Caco-2 (cell line): ENCODE measurements at regions of chr3 and their contacts with region 1.

Region 1: GRCh38 chr3:188037216-188037718 is 116.7 kb upstream of the LPP start:
- DNase-seq: peak; percentile 82 to 88
- H3K4me3 ChIP-seq: no peak overlapping the region
- H3K4me3 Mint-ChIP-seq: peak overlapping the region; percentile 40
- H3K27ac Mint-ChIP-seq: peak overlapping the region; percentile 53
- H3K4me1 ChIP-seq: peaks cover 34% of the 10 kb centered on the region
- H3K4me1 Mint-ChIP-seq: peaks cover 31% of the 10 kb centered on the region
- H3K27me3 ChIP-seq: no peaks in the 10 kb centered on the region
- H3K27me3 Mint-ChIP-seq: no peaks in the 10 kb centered on the region
- CTCF ChIP-seq: peak; percentile 51 to 77

Region 2: GRCh38 chr3:187935623-187936156 is 101.6 kb before region 1 on chr3:
- CTCF ChIA-PET with region 1: no interaction called
- POLR2A ChIA-PET with region 1: no interaction called
- intact Hi-C with region 1: no loop called
- DNase-seq: no peak
- H3K4me3 ChIP-seq: no peak overlapping the region
- H3K4me3 Mint-ChIP-seq: no peak overlapping the region
- H3K27ac Mint-ChIP-seq: no peak overlapping the region
- H3K4me1 ChIP-seq: no peaks in the 10 kb centered on the region
- H3K4me1 Mint-ChIP-seq: no peaks in the 10 kb centered on the region
- H3K27me3 ChIP-seq: no peaks in the 10 kb centered on the region
- H3K27me3 Mint-ChIP-seq: no peaks in the 10 kb centered on the region
- CTCF ChIP-seq: no peak

Region 3: DNA sequence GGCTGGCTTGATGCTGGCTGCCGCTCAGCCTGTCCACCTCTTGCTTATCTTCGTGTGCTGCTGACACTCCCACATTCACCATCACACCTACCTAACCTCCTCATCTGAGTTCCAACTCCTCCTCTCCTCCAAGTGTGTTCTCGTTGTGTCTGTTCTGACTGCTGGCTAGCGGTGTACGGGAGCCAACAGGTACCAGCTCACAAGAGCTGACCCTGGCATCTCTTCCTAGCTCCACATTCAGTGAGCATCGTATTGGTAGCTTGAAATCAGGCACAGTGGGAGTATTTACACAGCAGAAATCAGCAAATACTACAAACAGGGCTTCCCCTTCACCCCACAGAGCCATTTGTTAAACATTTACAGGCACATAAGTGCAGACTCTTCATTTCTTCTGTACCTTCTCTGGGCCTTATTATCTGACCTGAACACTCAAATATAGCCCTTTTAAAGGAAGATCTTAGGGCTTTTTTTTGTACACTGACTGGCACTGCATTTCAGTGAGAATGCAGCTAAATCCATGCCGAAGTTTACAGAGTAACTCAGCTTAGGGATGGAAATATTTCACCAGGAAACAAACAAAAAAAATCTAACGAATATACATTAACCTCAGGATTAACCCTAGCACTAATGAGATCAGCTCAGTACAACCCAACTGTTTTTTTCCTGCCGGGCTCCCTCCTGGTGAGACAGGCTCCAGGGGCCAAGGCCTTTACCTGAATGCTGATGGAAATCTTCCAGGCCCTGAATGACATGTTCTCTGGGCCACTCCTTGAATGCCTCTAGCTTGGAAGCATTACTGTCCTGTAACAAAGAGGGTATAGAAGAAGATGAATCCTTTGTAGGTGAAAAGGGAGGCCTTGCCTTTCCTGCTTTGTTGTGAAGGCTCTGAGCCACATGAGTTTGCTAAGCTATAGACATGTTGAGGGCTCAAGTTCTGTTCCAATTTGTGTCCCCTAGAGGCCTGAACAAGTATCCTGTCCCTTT is 33.8 kb before region 1 on chr3:
- CTCF ChIA-PET with region 1: no interaction called
- POLR2A ChIA-PET with region 1: no interaction called
- intact Hi-C with region 1: loop called (anchors 1 kb)
- DNase-seq: peak; percentile 58 to 60
- H3K4me3 ChIP-seq: peak overlapping the region; percentile 24
- H3K4me3 Mint-ChIP-seq: peak overlapping the region; percentile 63
- H3K27ac Mint-ChIP-seq: peak overlapping the region; percentile 72
- H3K4me1 ChIP-seq: peaks cover 34% of the 10 kb centered on the region
- H3K4me1 Mint-ChIP-seq: peaks cover 41% of the 10 kb centered on the region
- H3K27me3 ChIP-seq: no peaks in the 10 kb centered on the region
- H3K27me3 Mint-ChIP-seq: no peaks in the 10 kb centered on the region
- CTCF ChIP-seq: no peak

Region 4: DNA sequence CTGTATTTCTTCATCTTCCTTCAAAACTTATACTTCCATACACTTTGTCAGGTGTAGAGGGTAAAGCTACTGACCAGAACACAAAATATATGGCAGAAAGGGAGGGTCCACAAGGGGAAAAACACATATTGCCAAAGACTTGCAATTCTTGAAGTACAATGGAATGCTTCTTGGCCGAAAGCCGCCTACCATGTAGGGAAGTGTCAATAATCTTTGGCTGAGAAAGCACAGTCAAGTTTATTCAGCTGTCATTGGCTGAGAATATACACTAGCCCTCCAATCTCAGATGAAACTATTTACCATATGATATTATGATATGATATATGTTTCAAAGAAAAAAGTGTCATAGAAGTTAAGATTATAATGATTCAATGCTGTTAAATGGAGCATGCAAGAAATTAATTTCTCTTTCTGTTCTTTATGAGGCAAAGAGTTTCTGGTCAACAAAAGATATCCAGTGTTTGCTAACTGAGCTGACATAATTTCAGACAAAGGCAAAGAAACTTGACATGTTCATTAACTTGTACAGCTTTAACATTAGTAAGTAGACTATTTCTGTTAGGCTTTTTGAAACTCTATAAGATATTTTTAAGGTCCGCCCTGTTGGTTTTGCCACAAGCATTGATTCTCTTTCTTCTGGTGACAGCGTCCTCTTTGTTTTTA is 27.7 kb after region 1 on chr3:
- CTCF ChIA-PET with region 1: no interaction called
- POLR2A ChIA-PET with region 1: no interaction called
- intact Hi-C with region 1: loop called (anchors 1 kb)
- DNase-seq: peak in 1 of 2 experiments; percentile 37
- H3K4me3 ChIP-seq: no peak overlapping the region
- H3K4me3 Mint-ChIP-seq: no peak overlapping the region
- H3K27ac Mint-ChIP-seq: peak overlapping the region; percentile 63
- H3K4me1 ChIP-seq: peaks cover 43% of the 10 kb centered on the region
- H3K4me1 Mint-ChIP-seq: peaks cover 23% of the 10 kb centered on the region
- H3K27me3 ChIP-seq: no peaks in the 10 kb centered on the region
- H3K27me3 Mint-ChIP-seq: no peaks in the 10 kb centered on the region
- CTCF ChIP-seq: no peak

Region 5: GRCh38 chr3:188123170-188123905 is 86.1 kb after region 1 on chr3:
- CTCF ChIA-PET with region 1: no interaction called
- POLR2A ChIA-PET with region 1: no interaction called
- intact Hi-C with region 1: loop called (anchors 1 kb)
- DNase-seq: peak; percentile 64 to 65
- H3K4me3 ChIP-seq: no peak overlapping the region
- H3K4me3 Mint-ChIP-seq: peak overlapping the region; percentile 58
- H3K27ac Mint-ChIP-seq: peak overlapping the region; percentile 85
- H3K4me1 ChIP-seq: peaks cover 44% of the 10 kb centered on the region
- H3K4me1 Mint-ChIP-seq: peaks cover 38% of the 10 kb centered on the region
- H3K27me3 ChIP-seq: no peaks in the 10 kb centered on the region
- H3K27me3 Mint-ChIP-seq: no peaks in the 10 kb centered on the region
- CTCF ChIP-seq: no peak

Region 6: GRCh38 chr3:188212308-188212969 is 175.2 kb after region 1 on chr3:
- CTCF ChIA-PET with region 1: no interaction called
- POLR2A ChIA-PET with region 1: no interaction called
- intact Hi-C with region 1: loop called (anchors 1 kb)
- DNase-seq: peak; percentile 55 to 60
- H3K4me3 ChIP-seq: no peak overlapping the region
- H3K4me3 Mint-ChIP-seq: peak overlapping the region; percentile 44
- H3K27ac Mint-ChIP-seq: peak overlapping the region; percentile 79
- H3K4me1 ChIP-seq: peaks cover 60% of the 10 kb centered on the region
- H3K4me1 Mint-ChIP-seq: peaks cover 35% of the 10 kb centered on the region
- H3K27me3 ChIP-seq: no peaks in the 10 kb centered on the region
- H3K27me3 Mint-ChIP-seq: no peaks in the 10 kb centered on the region
- CTCF ChIP-seq: no peak